ENCODE measurements at regions of chr1 and their contacts with region 1.

Region 1: DNA sequence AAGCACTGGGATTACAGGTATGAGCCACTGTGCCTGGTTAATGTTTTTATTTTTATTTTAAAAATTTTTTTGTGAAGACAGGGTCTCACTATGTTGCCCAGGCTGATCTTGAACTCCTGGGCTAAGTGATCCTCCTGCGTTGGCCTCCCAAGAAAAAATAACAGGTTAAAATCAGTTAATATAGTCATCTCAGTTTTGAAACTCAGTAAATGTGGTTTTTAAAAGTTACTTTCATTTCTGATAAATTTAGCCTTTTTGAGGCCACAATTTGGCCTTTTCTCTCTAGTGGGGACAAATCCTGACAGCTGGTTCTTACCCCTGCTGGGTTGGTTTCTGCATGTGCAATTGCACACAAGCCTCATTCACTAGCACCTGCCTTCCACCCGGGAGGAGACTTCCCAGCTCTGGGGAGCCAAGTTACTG is 13.3 kb downstream of the PMF1 start:
- DNase-seq: no peak
- H3K4me3 Mint-ChIP-seq: no peak overlapping the region
- H3K27ac Mint-ChIP-seq: no peak overlapping the region
- H3K4me1 Mint-ChIP-seq: peaks cover 17% of the 10 kb centered on the region
- H3K27me3 Mint-ChIP-seq: no peaks in the 10 kb centered on the region
- CTCF ChIP-seq: no peak

Region 2: DNA sequence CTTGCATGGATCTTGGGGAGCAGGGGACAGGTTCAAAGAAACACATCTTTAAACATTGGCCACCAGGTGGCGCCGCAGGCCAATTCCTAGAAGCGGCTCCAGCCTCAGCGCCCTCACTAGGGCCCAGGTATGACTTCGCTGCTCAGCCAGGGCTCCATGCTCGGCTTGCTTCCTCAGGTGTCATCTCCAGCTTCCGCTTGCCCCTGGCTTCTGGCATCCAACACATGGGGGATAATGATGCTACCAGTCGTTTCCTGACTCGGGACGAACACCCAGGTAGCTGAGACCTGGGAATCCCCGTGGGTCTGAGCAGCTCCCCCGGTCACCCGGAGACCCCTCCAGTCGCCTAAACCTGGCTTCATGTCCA is 135.3 kb before region 1 on chr1:
- CTCF ChIA-PET with region 1: interaction called, 14 read pairs
- intact Hi-C with region 1: loop called (anchors 1 kb)
- DNase-seq: peak; percentile 94
- H3K4me3 Mint-ChIP-seq: no peak overlapping the region
- H3K27ac Mint-ChIP-seq: no peak overlapping the region
- H3K4me1 Mint-ChIP-seq: peaks cover 47% of the 10 kb centered on the region
- H3K27me3 Mint-ChIP-seq: no peaks in the 10 kb centered on the region
- CTCF ChIP-seq: peak; percentile 95

Region 3: GRCh38 chr1:156140879-156141252 is 85.3 kb before region 1 on chr1:
- CTCF ChIA-PET with region 1: interaction called, 55 read pairs
- intact Hi-C with region 1: loop called (anchors 1 kb)
- DNase-seq: no peak
- H3K4me3 Mint-ChIP-seq: no peak overlapping the region
- H3K27ac Mint-ChIP-seq: peak overlapping the region; percentile 85
- H3K4me1 Mint-ChIP-seq: peaks cover 11% of the 10 kb centered on the region
- H3K27me3 Mint-ChIP-seq: peaks cover 14% of the 10 kb centered on the region
- CTCF ChIP-seq: no peak

Region 4: GRCh38 chr1:156193488-156194299 is 32.4 kb before region 1 on chr1 and contains the start of gene SLC25A44:
- CTCF ChIA-PET with region 1: interaction called, 18 read pairs
- intact Hi-C with region 1: no loop called
- DNase-seq: peak; percentile 98
- H3K4me3 Mint-ChIP-seq: peak within 1 kb of the TSS; percentile 95
- H3K27ac Mint-ChIP-seq: peak within 1 kb of the TSS; percentile 85
- H3K4me1 Mint-ChIP-seq: peaks cover 30% of the 10 kb centered on the region
- H3K27me3 Mint-ChIP-seq: peaks cover 7% of the 10 kb centered on the region
- CTCF ChIP-seq: peak; percentile 52
- total RNA-seq, gene SLC25A44: 28.2 and 32.5 TPM in 2 replicates

Region 5: GRCh38 chr1:156245451-156246232 is 19.5 kb after region 1 on chr1:
- CTCF ChIA-PET with region 1: interaction called, 13 read pairs
- intact Hi-C with region 1: no loop called
- DNase-seq: peak; percentile 24
- H3K4me3 Mint-ChIP-seq: peak overlapping the region; percentile 55
- H3K27ac Mint-ChIP-seq: peak overlapping the region; percentile 66
- H3K4me1 Mint-ChIP-seq: no peaks in the 10 kb centered on the region
- H3K27me3 Mint-ChIP-seq: peaks cover 23% of the 10 kb centered on the region
- CTCF ChIP-seq: no peak

Region 6: DNA sequence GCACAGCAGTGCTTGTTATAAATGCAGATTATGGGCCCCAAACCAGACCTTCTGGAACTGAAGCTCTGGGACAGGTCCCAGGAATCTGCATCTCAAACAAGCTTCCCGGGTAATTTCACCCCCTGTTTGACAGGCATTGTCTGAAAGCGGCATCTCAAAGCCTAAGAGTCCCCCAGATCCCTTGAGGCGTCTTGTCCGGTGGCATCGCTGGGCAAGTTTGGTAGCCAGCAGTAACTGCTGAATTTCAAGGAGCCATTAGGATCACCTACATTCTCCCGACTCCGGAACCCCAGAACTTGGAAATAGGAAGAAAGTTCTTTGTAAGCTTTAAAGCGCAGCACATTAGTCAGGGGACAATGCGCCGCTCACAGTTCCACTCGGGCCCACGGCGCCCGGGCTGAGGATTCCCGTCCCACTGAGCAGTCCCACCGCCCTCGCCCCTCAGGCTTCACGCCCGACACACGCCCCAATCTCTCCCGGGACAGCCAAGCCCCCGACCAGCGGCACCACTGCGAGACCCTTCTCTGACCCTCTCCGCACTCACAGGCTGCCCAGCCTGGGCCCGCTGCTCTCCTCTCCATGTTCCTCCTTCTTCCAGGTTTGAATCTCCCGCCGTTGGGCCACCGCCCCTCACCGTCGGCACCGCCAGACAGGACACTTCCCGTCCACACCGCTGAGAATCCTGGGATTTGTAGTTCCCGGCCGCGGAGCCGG is 346.0 kb after region 1 on chr1 and contains the start of gene IQGAP3:
- CTCF ChIA-PET with region 1: no interaction called
- intact Hi-C with region 1: no loop called
- DNase-seq: peak; percentile 95
- H3K4me3 Mint-ChIP-seq: peak within 1 kb of the TSS; percentile 92
- H3K27ac Mint-ChIP-seq: peak within 1 kb of the TSS; percentile 80
- H3K4me1 Mint-ChIP-seq: peaks cover 38% of the 10 kb centered on the region
- H3K27me3 Mint-ChIP-seq: peaks cover 22% of the 10 kb centered on the region
- CTCF ChIP-seq: no peak
- total RNA-seq, gene IQGAP3: 66.2 and 93.6 TPM in 2 replicates